Activated B cell treated with CpG ODN at 0.5 μM for 24 hours (primary cell): ENCODE measurements at regions of chr16 and their contacts with region 1.

Region 1: GRCh38 chr16:46673320-46674013 is 15.5 kb downstream of the VPS35 start:
- DNase-seq: no peak
- ATAC-seq: peak; percentile 92
- H3K4me3 Mint-ChIP-seq: no peak overlapping the region
- H3K27ac Mint-ChIP-seq: no peak overlapping the region
- H3K4me1 Mint-ChIP-seq: no peaks in the 10 kb centered on the region
- H3K27me3 Mint-ChIP-seq: no peaks in the 10 kb centered on the region
- CTCF ChIP-seq: peak; percentile 37

Region 2: GRCh38 chr16:46482895-46483294 is 190.6 kb before region 1 on chr16:
- CTCF ChIA-PET with region 1: no interaction called
- POLR2A ChIA-PET with region 1: no interaction called
- intact Hi-C with region 1: no loop called
- DNase-seq: no peak
- ATAC-seq: no peak
- H3K4me3 Mint-ChIP-seq: no peak overlapping the region
- H3K27ac Mint-ChIP-seq: no peak overlapping the region
- H3K4me1 Mint-ChIP-seq: no peaks in the 10 kb centered on the region
- H3K27me3 Mint-ChIP-seq: no peaks in the 10 kb centered on the region
- CTCF ChIP-seq: no peak

Region 3: GRCh38 chr16:46709469-46710005 is 36.1 kb after region 1 on chr16:
- CTCF ChIA-PET with region 1: no interaction called
- POLR2A ChIA-PET with region 1: no interaction called
- intact Hi-C with region 1: no loop called
- DNase-seq: no peak
- ATAC-seq: no peak
- H3K4me3 Mint-ChIP-seq: no peak overlapping the region
- H3K27ac Mint-ChIP-seq: no peak overlapping the region
- H3K4me1 Mint-ChIP-seq: peaks cover 16% of the 10 kb centered on the region
- H3K27me3 Mint-ChIP-seq: no peaks in the 10 kb centered on the region
- CTCF ChIP-seq: no peak

Region 4: DNA sequence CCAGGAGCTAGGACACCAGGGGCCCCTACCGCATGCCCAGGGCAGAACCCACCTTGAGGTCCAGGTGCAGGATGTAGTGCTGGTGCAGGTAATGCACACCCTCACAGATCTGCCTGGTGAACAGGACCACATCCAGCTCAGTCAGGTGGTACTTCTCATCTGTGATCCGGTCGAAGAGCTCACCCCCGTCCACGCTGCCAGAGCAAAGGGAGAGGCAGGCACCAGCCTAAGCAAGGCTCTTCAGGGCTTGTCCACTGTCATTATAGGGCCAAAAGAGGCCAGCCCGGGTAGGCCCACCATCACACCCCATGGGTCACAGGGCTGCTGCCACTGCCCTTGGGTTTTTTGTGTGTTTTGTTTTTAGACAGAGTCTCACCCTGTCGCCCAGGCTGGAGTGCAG is 53.7 kb after region 1 on chr16:
- CTCF ChIA-PET with region 1: no interaction called
- POLR2A ChIA-PET with region 1: no interaction called
- intact Hi-C with region 1: no loop called
- DNase-seq: no peak
- ATAC-seq: no peak
- H3K4me3 Mint-ChIP-seq: no peak overlapping the region
- H3K27ac Mint-ChIP-seq: no peak overlapping the region
- H3K4me1 Mint-ChIP-seq: no peaks in the 10 kb centered on the region
- H3K27me3 Mint-ChIP-seq: no peaks in the 10 kb centered on the region
- CTCF ChIP-seq: no peak

Region 5: GRCh38 chr16:46801428-46802049 is 128.1 kb after region 1 on chr16:
- CTCF ChIA-PET with region 1: interaction called, 38 read pairs
- POLR2A ChIA-PET with region 1: no interaction called
- intact Hi-C with region 1: loop called (anchors 1 kb)
- DNase-seq: no peak
- ATAC-seq: no peak
- H3K4me3 Mint-ChIP-seq: no peak overlapping the region
- H3K27ac Mint-ChIP-seq: no peak overlapping the region
- H3K4me1 Mint-ChIP-seq: no peaks in the 10 kb centered on the region
- H3K27me3 Mint-ChIP-seq: no peaks in the 10 kb centered on the region
- CTCF ChIP-seq: no peak

Region 6: DNA sequence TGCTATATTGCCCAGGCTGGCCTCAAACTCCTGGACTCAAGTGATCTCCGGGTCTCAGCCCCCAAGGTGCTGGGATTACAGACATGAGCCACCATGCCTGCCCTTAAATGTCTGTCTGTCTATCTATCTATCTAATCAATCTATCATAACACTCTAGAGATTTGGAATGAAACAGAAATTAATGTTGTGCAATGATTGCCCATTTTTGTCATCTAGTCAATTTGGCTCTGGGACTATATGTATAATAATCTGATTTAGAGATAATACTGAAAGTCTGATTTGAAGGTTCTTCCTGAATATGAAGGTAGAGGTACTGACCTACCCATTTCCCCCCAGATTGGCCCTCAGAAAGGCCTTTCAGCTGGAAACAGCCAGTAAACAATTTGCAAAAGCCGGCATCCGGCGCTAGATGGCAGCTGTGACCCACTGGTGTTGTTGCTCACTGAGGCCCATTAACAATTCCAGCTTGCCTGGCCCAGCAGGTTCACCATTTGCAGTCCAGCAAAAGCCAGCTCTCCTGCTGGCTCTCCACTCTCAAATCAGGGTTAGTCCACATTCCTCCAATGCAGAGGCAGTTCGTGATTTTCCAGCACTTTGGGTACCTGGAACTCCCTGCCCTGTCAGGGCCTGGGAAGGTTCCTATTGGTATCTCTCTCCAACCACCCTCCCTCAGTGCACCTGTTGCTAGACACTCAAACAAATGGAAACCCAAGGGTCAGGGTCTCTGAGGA is 180.4 kb after region 1 on chr16:
- CTCF ChIA-PET with region 1: interaction called, 15 read pairs
- POLR2A ChIA-PET with region 1: no interaction called
- intact Hi-C with region 1: loop called (anchors 1 kb)
- DNase-seq: peak; percentile 53
- ATAC-seq: peak; percentile 72
- H3K4me3 Mint-ChIP-seq: no peak overlapping the region
- H3K27ac Mint-ChIP-seq: no peak overlapping the region
- H3K4me1 Mint-ChIP-seq: peaks cover 17% of the 10 kb centered on the region
- H3K27me3 Mint-ChIP-seq: no peaks in the 10 kb centered on the region
- CTCF ChIP-seq: peak; percentile 63

Region 7: DNA sequence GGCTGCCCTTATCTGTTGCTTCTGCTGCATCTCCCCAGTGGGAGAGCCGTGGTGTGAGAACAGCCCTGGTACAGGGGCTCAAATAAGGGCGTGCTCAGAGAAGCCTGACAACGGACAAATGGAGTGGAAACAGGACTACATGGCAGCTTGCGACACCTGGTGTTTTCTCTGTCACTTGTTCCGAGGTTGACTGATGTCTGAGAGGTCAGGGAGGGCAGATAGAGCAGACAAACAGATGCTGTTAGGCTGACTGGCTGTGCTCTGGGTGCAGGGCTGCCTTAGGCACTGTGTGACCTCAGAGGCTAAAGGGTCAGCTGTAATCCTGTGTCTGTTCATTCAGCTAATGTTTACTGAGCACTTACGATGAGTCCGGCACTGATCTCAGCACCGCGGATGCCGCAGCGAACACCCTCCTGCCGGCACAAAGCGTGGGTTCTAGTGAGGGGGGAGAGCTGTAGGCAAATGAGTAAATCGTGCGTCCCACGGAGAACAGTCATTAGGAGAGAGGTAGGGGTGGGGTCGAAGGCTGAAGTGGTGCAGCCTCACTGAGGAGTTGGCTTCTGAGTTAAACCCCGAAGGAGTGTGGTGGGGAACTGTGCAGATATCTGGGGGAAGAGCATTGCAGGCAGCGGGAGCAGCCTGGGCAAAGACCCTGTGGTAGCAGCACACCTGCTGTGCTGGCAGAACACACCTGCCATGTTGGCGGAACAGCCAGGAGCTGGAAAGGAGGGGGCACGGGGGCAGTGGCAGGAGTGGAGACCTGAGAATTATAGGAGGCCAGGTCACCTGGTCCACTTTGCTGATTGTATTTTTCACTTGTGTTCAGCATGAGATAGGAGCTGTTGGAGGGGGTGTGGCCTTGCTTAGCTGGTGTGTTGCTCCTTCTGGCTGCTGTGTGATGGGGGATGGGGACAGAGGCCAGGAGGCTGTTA is 245.7 kb after region 1 on chr16:
- CTCF ChIA-PET with region 1: interaction called, 45 read pairs
- POLR2A ChIA-PET with region 1: no interaction called
- intact Hi-C with region 1: loop called (anchors 2 kb)
- DNase-seq: peak; percentile 34
- ATAC-seq: peak; percentile 60
- H3K4me3 Mint-ChIP-seq: peak overlapping the region; percentile 75
- H3K27ac Mint-ChIP-seq: peak overlapping the region; percentile 80
- H3K4me1 Mint-ChIP-seq: peaks cover 69% of the 10 kb centered on the region
- H3K27me3 Mint-ChIP-seq: no peaks in the 10 kb centered on the region
- CTCF ChIP-seq: no peak

Region 8: GRCh38 chr16:48164907-48165726 is 1491.7 kb after region 1 on chr16:
- CTCF ChIA-PET with region 1: interaction called, 8 read pairs
- POLR2A ChIA-PET with region 1: no interaction called
- intact Hi-C with region 1: loop called (anchors 10 kb)
- DNase-seq: peak; percentile 60
- ATAC-seq: peak; percentile 89
- H3K4me3 Mint-ChIP-seq: no peak overlapping the region
- H3K27ac Mint-ChIP-seq: no peak overlapping the region
- H3K4me1 Mint-ChIP-seq: peaks cover 4% of the 10 kb centered on the region
- H3K27me3 Mint-ChIP-seq: peaks cover 4% of the 10 kb centered on the region
- CTCF ChIP-seq: no peak